Body of pancreas (tissue), 4 donors: ENCODE measurements at regions of chr5 and their contacts with region 1.

Region 1: DNA sequence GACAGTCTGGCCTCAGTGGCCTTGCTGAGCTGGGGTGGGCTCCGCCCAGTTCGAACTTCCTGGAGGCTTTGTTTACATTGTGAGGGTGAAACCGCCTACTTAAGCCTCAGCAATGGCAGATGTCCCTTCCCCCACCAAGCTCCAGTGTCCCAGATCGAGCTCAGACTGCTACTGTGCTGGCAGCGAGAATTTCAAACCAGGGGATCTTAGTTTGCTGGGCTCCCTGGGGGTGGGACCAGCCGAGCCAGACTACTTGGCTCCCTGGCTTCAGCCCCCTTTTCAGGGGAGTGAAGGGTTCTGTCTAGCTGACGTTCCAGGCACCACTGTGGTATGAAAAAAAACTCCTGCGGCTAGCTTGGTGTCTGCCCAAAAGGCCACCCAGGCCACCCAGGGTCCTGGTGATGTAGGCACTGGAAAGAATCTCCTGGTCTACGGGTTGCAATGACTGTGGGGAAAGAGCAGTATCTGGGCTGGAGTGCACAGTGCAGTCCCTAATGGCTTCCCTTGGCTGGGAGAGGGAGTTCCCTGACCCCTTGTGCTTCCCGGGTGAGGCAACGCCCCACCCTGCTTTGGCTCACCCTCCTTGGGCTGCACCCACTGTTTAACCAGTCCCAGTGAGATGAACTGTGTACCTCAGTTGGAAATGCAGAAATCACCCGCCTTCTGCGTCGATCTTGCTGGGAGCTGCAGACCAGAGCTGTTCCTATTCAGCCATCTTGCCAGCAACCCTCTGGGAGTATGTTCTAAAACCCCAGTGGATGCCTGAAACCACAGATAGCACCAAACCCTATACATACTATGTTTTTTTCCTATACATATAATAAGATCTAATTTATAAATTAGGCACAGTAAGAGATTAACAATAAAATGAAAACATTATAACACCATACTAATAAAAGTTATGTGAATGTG is 95.5 kb downstream of the TMEM161B start:
- DNase-seq: no peak
- ATAC-seq: no peak
- H3K4me3 ChIP-seq: no peak overlapping the region
- H3K27ac ChIP-seq: no peak overlapping the region
- H3K4me1 ChIP-seq: no peaks in the 10 kb centered on the region
- H3K27me3 ChIP-seq: no peaks in the 10 kb centered on the region
- CTCF ChIP-seq: no peak
- POLR2A ChIP-seq: no peak

Region 2: DNA sequence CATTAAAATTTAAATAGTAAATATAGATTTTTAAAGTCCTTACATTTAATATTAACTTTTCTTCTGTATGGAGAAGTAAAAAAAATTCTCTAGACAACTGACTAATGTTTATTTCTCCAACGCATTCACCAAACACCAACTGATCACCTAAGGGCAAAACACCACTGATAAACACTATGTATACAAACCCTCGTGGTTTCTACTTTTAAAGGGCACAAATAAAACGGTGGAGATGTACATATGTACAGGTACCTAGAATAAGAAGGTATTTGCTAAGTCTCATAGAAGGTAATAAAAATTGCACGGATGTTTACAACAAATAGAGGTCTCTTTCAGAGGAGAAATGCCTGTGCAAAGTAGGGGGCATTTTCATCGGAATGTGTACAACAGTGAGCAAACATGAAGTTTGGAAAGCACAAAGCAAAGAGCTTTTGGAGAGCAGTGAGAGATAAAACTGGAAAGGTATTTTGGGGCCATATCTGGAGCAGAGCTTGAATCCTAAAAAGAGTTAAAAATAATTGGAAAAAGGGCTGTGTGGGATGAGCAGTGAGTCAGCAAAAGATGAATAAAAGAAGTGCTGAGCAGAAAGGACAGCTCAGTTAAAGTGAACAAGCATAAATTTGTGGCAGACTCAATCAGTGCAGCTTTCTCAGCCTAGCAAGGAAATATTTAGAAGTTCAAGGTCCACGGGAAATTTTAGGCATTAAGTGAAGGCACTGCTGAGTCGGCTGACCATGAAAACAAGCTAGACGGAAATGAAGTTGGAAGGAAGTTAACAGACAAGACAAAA is 64.4 kb before region 1 on chr5:
- intact Hi-C with region 1: loop called (anchors 10 kb)
- DNase-seq: no peak
- ATAC-seq: no peak
- H3K4me3 ChIP-seq: no peak overlapping the region
- H3K27ac ChIP-seq: no peak overlapping the region
- H3K4me1 ChIP-seq: no peaks in the 10 kb centered on the region
- H3K27me3 ChIP-seq: no peaks in the 10 kb centered on the region
- CTCF ChIP-seq: no peak
- POLR2A ChIP-seq: no peak